AG04449 (cell line): ENCODE measurements at regions of chr10 and their contacts with region 1.

Region 1: GRCh38 chr10:48444266-48444665 is 137.8 kb downstream of the MAPK8 start:
- DNase-seq: no peak
- H3K4me3 ChIP-seq: no peak overlapping the region
- CTCF ChIP-seq: peak; percentile 26

Region 2: GRCh38 chr10:48423884-48424283 is 20.4 kb before region 1 on chr10:
- CTCF ChIA-PET with region 1: no interaction called
- POLR2A ChIA-PET with region 1: no interaction called
- DNase-seq: no peak
- H3K4me3 ChIP-seq: no peak overlapping the region
- CTCF ChIP-seq: no peak

Region 3: DNA sequence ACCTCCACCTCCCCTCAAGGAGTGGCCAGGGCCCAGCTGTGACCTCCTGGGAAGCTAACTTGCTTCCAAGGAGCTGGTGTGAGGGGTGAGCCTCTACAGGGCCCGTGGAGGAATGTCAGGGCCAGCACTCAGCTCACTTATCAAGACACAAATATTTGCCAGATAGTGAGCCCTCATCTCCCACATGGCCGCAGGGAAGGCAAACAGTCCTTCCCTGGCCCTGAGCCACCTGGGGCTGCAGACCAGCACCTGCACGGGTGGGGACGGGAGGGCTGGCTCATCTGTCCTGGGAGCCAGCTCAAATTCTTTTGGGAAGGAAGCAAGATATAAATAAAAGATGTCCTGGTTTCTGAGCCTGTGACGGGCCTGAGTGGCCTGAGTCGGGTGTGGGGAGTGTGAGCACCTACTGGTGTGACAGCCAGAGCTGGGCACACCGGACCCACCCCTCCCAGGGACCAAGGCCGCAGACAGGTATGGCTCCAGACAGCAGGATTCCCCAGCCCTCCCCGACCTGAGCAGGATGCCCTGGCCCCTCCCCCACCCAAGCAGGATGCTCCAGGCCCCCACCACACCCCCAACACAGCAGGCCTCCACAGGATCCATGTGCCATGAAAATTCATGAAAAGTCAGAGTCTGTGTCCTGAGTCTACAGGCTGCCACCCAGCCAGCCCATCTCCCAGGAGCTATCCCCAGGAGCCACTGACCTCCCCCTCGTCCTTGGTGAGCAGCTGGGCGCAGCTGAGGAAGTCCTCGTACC is 10.2 kb after region 1 on chr10:
- CTCF ChIA-PET with region 1: interaction called, 11 read pairs
- POLR2A ChIA-PET with region 1: no interaction called
- DNase-seq: no peak
- H3K4me3 ChIP-seq: no peak overlapping the region
- CTCF ChIP-seq: no peak

Region 4: DNA sequence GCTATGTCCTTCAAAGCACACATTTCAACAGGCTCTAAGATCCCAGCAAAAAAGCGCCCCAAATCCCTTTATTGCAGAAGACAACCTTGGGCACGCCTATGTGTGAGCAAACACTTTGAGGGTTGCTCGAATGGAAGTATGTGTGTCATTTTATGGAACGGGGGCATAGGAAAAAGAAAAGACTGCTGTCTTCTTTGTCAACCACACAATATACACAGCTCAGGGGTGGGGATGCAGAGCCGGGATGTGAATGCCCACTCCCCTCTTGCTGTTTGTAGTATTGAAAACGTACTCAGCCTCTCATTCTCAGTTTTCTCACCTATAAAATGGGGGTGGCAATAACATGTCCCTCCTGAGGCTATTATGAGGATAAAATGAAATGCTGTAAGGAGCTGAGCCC is 1267.2 kb after region 1 on chr10:
- CTCF ChIA-PET with region 1: no interaction called
- POLR2A ChIA-PET with region 1: no interaction called
- DNase-seq: no peak
- H3K4me3 ChIP-seq: no peak overlapping the region
- CTCF ChIP-seq: no peak